SK-N-SH (cell line): ENCODE measurements at regions of chr17 and their contacts with region 1.

Region 1: DNA sequence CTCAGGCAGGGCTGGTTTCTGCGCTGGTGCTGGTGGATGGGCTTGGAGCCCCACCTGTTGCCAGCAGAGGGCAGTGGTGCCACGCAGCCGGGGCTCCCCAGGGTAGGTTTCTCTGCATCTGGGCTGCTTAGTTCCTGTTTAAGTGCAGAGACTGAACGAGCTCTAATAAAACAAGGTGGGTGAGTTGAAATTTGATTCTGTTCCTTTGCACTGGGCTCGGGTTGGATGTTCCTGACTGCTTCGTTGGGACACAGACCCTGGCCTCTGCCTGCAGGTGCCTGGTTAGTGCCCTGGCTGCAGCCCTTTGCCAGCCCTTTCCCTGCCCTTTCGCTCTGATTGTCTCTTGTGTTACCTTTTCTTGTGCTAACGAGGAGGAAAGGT is 30.0 kb downstream of the TBCD start:
- DNase-seq: peak; percentile 98
- H3K4me3 ChIP-seq: no peak overlapping the region; a peak in 1 of 4 replicates
- H3K27ac ChIP-seq: peak overlapping the region in 1 of 2 experiments; percentile 19; a peak in 1 of 4 replicates
- H3K4me1 ChIP-seq: no peaks in the 10 kb centered on the region; a peak in 2 of 4 replicates
- H3K27me3 ChIP-seq: no peaks in the 10 kb centered on the region
- CTCF ChIP-seq: peak; percentile 100
- EP300 ChIP-seq: no peak
- RAD21 ChIP-seq: peak; percentile 99

Region 2: DNA sequence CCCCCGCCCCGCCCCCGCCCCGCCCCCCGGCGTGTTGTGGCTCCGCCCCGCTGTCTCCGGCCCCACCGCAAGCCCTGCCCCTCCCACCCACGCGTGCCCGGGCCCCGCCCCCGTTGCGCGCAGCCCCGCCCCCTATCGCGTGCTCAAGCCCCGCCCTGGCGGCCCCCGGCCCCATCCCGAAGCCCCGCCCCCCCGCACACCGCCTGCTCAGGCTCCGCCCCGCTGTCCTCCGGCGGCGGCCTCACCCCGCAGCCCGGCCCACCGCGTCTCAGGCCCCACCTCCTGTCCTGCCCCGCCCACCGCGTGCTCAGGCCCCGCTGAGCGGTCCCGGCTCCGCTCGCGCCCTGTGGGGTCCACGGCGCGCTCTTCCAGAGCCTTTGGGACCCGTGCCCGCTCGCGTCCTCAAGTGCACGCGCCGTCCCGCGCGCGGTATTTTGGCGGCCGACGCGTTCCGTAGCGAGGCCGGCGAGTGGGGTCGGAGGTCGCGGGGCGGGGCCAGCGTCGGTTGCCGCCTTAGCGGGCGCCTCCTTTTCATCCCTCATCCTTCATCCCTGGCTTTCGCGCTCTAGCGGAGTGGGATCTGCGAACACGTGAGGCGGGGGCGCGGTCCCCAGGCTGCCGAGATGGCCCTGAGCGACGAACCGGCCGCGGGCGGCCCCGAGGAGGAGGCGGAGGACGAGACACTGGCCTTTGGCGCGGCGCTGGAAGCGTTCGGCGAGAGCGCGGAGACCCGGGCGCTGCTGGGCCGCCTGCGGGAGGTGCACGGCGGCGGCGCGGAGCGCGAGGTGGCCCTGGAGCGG is 30.1 kb before region 1 on chr17 and contains the start of gene TBCD:
- CTCF ChIA-PET with region 1: interaction called, 22 read pairs
- POLR2A ChIA-PET with region 1: no interaction called
- DNase-seq: peak; percentile 100
- H3K4me3 ChIP-seq: peak within 1 kb of the TSS; percentile 78 to 98
- H3K27ac ChIP-seq: peak within 1 kb of the TSS; percentile 75 to 89
- H3K4me1 ChIP-seq: peaks cover 6 to 14% of the 10 kb centered on the region in 2 experiments; a peak in 1 of 4 replicates
- H3K27me3 ChIP-seq: no peaks in the 10 kb centered on the region
- CTCF ChIP-seq: no peak
- EP300 ChIP-seq: no peak
- RAD21 ChIP-seq: no peak
- polyA plus RNA-seq, gene TBCD: 78.7 and 107 TPM in 2 replicates

Region 3: DNA sequence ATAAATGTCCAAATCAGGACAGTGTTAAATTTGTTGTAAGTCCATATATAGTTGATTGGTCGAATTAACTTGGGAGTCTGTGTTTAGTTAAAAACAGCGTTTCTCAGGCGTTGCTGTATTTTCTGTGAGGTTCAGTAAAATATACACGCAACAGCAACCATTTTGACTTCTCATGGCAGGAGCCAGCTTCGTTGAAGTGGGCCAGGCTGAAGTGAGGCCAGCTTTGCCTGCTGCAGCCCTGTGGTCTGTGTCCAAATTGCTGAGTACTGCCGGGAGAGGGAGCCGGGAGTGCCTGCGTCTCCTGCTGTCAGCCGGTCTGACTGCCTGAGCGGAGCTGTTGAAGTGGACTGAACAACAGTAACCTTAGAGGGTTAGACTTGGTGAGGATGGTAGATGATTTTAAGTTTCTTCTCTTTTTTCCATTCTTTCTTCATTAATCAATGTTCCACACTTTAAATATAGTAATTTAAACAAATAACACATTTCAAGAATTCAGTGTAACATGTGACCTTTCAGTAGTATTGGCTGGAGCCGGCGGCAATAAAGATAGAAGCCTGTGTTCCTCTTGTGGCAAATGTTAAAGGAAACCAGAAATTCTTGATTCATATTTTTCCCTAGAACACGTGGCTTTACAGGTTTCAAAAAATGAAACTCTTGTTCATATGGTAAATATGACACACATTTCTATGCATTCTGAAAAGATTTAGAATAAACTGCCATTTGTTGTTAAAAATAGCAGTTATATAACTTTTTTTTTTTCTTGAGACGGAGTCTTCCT is 94.9 kb after region 1 on chr17:
- CTCF ChIA-PET with region 1: interaction called, 15 read pairs
- POLR2A ChIA-PET with region 1: no interaction called
- DNase-seq: peak; percentile 88
- H3K4me3 ChIP-seq: no peak overlapping the region
- H3K27ac ChIP-seq: no peak overlapping the region
- H3K4me1 ChIP-seq: peaks cover 0 to 17% of the 10 kb centered on the region in 2 experiments; a peak in 1 of 4 replicates
- H3K27me3 ChIP-seq: no peaks in the 10 kb centered on the region
- CTCF ChIP-seq: peak; percentile 49
- EP300 ChIP-seq: no peak
- RAD21 ChIP-seq: peak; percentile 67

Region 4: DNA sequence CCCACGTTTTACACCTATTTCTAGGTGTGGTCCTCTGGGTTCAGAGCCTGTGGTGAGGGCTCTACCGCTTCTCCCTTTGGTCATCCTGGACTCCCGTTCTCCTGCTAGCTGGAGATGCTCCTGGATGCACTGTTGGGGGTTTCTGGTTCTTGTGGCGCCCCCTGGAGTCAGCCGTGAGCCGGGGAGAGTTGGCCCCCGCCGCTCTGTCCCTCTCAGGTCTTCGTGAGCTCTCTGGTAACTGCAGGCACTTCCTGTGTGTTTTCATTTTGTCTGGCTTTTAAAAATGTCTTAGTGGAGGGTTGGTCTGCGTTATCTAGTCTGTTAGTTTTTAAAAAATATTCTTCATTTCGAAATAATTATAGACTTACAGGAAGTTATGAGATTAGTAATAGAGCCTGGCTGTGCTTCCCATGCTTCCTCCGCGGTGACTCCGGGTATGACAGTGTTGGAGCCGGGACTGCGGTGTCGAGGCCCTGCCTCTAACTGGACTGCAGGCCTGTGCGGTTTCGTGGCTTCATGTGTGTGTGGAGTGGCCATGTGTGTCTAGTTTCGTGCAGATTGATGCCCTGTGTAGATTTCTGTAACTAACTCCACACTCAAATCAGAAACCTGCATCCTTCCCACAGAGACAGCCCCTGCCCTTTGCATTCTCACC is 135.9 kb after region 1 on chr17:
- CTCF ChIA-PET with region 1: interaction called, 38 read pairs
- POLR2A ChIA-PET with region 1: interaction called, 3 read pairs
- DNase-seq: peak; percentile 83
- H3K4me3 ChIP-seq: no peak overlapping the region
- H3K27ac ChIP-seq: no peak overlapping the region; a peak in 1 of 4 replicates
- H3K4me1 ChIP-seq: no peaks in the 10 kb centered on the region
- H3K27me3 ChIP-seq: no peaks in the 10 kb centered on the region
- CTCF ChIP-seq: peak; percentile 58
- EP300 ChIP-seq: no peak
- RAD21 ChIP-seq: peak; percentile 56

Region 5: GRCh38 chr17:83000738-83001137 is 218.9 kb after region 1 on chr17:
- CTCF ChIA-PET with region 1: no interaction called
- POLR2A ChIA-PET with region 1: no interaction called
- DNase-seq: no peak
- H3K4me3 ChIP-seq: no peak overlapping the region
- H3K27ac ChIP-seq: no peak overlapping the region
- H3K4me1 ChIP-seq: no peaks in the 10 kb centered on the region
- H3K27me3 ChIP-seq: no peaks in the 10 kb centered on the region
- CTCF ChIP-seq: no peak
- EP300 ChIP-seq: no peak
- RAD21 ChIP-seq: no peak

Region 6: GRCh38 chr17:83076930-83077329 is 295.0 kb after region 1 on chr17:
- CTCF ChIA-PET with region 1: interaction called, 12 read pairs
- POLR2A ChIA-PET with region 1: no interaction called
- DNase-seq: peak; percentile 71
- H3K4me3 ChIP-seq: no peak overlapping the region
- H3K27ac ChIP-seq: no peak overlapping the region
- H3K4me1 ChIP-seq: peaks cover 8 to 30% of the 10 kb centered on the region in 2 experiments; a peak in 2 of 4 replicates
- H3K27me3 ChIP-seq: no peaks in the 10 kb centered on the region
- CTCF ChIP-seq: peak; percentile 49
- EP300 ChIP-seq: no peak
- RAD21 ChIP-seq: peak; percentile 67